IMR-90 (cell line): ENCODE measurements at regions of chr10 and their contacts with region 1.

Region 1: GRCh38 chr10:63157845-63158624 is 24.9 kb downstream of the NRBF2 start:
- DNase-seq: peak; percentile 95
- ATAC-seq: peak; percentile 77
- H3K4me3 ChIP-seq: no peak overlapping the region
- H3K27ac ChIP-seq: no peak overlapping the region
- H3K4me1 ChIP-seq: peaks cover 2% of the 10 kb centered on the region; the same call in 1 of the 2 replicates
- H3K27me3 ChIP-seq: no peaks in the 10 kb centered on the region
- CTCF ChIP-seq: peak; percentile 78
- POLR2A ChIP-seq: no peak
- RAD21 ChIP-seq: peak; percentile 92

Region 2: DNA sequence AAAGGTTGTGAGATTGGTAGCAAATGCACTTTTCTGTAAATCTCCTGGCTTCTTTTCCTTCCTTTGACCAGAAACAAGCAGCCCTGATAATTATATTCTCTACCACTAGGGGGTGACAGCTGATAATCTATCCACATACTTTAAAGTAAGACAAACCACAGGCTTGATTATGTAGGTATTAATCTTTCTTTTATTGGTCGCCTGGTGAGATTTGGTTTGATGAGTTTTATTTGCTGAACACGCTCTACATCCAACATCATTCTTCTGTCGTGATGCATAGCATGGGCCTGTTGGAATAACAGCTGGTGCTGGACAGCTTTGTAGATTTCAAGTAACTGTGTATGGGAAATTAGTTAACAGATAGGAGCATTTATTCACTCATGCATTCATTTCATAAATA is 720.3 kb before region 1 on chr10:
- CTCF ChIA-PET with region 1: no interaction called
- POLR2A ChIA-PET with region 1: no interaction called
- dilution Hi-C with region 1: no loop called
- in situ Hi-C with region 1: loop called (anchors 10 kb)
- intact Hi-C with region 1: loop called (anchors 2 kb)
- DNase-seq: peak; percentile 82
- ATAC-seq: peak; percentile 81
- H3K4me3 ChIP-seq: no peak overlapping the region
- H3K27ac ChIP-seq: no peak overlapping the region
- H3K4me1 ChIP-seq: peaks cover 2% of the 10 kb centered on the region
- H3K27me3 ChIP-seq: no peaks in the 10 kb centered on the region
- CTCF ChIP-seq: peak; percentile 83
- POLR2A ChIP-seq: no peak
- RAD21 ChIP-seq: peak; percentile 83

Region 3: DNA sequence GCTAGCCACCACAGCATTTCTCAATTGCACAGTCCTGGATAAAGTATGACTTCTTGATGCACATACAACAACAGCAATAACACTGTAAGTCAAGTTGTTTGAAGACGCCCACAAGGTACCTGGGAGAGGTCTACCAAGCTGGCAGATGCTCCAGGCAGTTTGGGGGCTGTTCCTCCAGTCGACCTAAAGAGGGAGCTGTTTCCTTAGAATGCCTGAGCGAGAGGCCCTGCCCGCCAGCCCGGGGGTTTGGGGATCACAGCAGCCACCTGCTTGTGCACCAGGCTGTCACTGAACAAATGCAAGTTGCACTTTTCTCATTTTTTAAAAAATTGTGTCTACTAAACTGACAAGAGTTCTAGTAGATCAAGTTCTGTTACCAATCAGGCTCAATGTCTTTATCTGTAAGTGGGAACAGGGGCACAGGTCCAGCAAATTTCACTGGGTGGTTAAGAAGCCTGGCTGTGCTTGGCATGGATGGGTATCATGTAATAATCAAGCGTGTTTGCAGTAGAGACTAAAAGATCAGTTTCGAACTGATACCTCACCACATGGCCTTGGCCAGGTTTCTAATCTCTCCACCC is 547.3 kb before region 1 on chr10:
- CTCF ChIA-PET with region 1: interaction called, 3 read pairs
- POLR2A ChIA-PET with region 1: no interaction called
- dilution Hi-C with region 1: loop called (anchors 25 kb)
- in situ Hi-C with region 1: loop called (anchors 10 kb)
- intact Hi-C with region 1: loop called (anchors 1 kb)
- DNase-seq: peak; percentile 47
- ATAC-seq: peak; percentile 83
- H3K4me3 ChIP-seq: no peak overlapping the region
- H3K27ac ChIP-seq: no peak overlapping the region
- H3K4me1 ChIP-seq: peaks cover 9% of the 10 kb centered on the region
- H3K27me3 ChIP-seq: no peaks in the 10 kb centered on the region
- CTCF ChIP-seq: peak; percentile 87
- POLR2A ChIP-seq: no peak
- RAD21 ChIP-seq: peak; percentile 92

Region 4: DNA sequence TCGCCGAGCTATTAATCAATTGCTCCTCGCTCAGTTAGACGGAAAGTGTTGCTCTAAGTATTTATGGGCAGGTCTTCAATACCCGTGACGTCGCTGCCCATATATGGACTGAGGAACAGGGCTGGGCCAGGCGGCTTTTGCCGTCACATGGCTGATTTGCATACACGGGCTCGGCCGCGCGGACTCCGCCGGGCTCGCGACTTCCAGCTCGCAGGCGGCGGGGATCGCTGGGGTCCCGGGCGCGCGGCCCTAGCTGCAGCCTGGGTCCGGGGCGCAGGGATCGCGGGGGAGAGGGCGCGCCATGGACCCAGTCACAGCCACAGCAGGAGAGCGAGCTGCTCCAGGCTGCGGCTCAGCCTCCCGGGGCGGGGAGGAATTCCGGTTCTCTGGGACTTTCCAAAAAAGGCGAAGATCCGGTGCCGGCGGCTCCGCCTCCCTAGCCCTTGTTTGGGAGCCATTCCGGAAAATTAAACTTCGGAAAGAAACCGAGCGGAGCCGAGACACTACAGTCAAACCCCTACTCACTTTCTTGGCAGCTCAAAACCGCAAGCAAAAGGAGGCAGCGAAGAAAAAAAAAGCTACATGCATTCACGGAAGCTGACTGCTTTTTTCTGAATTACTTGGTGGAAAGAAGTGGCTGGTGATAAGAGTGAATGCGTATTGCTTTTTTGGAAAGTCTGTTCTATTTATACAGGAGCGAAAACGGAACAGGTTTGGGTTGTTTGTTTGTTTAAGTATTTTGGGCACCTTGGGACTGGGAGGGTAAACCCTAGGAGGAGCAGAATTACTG is 341.5 kb before region 1 on chr10 and contains the start of gene EGR2:
- CTCF ChIA-PET with region 1: no interaction called
- POLR2A ChIA-PET with region 1: no interaction called
- dilution Hi-C with region 1: no loop called
- in situ Hi-C with region 1: loop called (anchors 10 kb)
- intact Hi-C with region 1: loop called (anchors 1 kb)
- DNase-seq: peak; percentile 94
- ATAC-seq: peak; percentile 91
- H3K4me3 ChIP-seq: peak within 1 kb of the TSS; percentile 73
- H3K27ac ChIP-seq: peak within 1 kb of the TSS; percentile 53
- H3K4me1 ChIP-seq: peaks cover 7% of the 10 kb centered on the region; the same call in 1 of the 2 replicates
- H3K27me3 ChIP-seq: peaks cover 48% of the 10 kb centered on the region
- CTCF ChIP-seq: no peak
- POLR2A ChIP-seq: peak; percentile 50
- RAD21 ChIP-seq: no peak
- total RNA-seq, gene EGR2: 0.36 and 0.56 TPM in 2 replicates

Region 5: DNA sequence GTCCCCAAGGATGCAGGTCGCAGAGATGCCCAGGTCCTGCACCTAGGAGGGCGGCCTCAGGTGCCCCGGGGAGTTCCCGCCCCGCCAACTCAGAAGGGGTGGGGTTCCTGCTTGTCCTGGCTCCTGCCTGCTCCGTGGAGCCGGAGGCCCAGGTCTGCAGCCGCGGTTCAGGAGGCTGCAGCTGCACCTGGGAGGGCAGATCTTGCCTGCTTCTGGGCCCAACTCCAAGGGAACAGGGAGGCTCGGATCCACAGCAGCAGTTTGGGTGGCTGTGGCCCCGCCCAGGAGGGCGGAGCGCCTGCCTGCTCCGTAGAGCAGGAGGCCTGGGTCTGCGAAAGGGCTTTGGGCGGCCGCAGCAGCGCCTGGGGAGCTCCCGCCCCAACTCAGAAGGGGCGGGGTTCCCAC is 233.7 kb before region 1 on chr10:
- CTCF ChIA-PET with region 1: no interaction called
- POLR2A ChIA-PET with region 1: no interaction called
- dilution Hi-C with region 1: no loop called
- in situ Hi-C with region 1: no loop called
- intact Hi-C with region 1: no loop called
- DNase-seq: no peak
- ATAC-seq: no peak
- H3K4me3 ChIP-seq: no peak overlapping the region
- H3K27ac ChIP-seq: no peak overlapping the region
- H3K4me1 ChIP-seq: no peaks in the 10 kb centered on the region
- H3K27me3 ChIP-seq: no peaks in the 10 kb centered on the region
- CTCF ChIP-seq: no peak
- POLR2A ChIP-seq: no peak
- RAD21 ChIP-seq: no peak

Region 6: GRCh38 chr10:63083904-63084689 is 73.9 kb before region 1 on chr10:
- CTCF ChIA-PET with region 1: interaction called, 3 read pairs
- POLR2A ChIA-PET with region 1: no interaction called
- dilution Hi-C with region 1: no loop called
- in situ Hi-C with region 1: no loop called
- intact Hi-C with region 1: loop called (anchors 5 kb)
- DNase-seq: peak; percentile 77
- ATAC-seq: peak; percentile 95
- H3K4me3 ChIP-seq: no peak overlapping the region
- H3K27ac ChIP-seq: no peak overlapping the region
- H3K4me1 ChIP-seq: no peaks in the 10 kb centered on the region; the same call in 1 of the 2 replicates
- H3K27me3 ChIP-seq: no peaks in the 10 kb centered on the region; the same call in 1 of the 2 replicates
- CTCF ChIP-seq: peak; percentile 74
- POLR2A ChIP-seq: no peak
- RAD21 ChIP-seq: peak; percentile 81